Heart right ventricle (tissue), 16 donors: ENCODE measurements at regions of chr2 and their contacts with region 1.

Region 1: GRCh38 chr2:25376750-25377621 is 35.3 kb upstream of the DNMT3A start:
- DNase-seq: peak; percentile 83 to 88
- ATAC-seq: peak; percentile 95 to 99 (median 98)
- H3K4me3 ChIP-seq: peak overlapping the region in 9 of 10 donors; percentile 7 to 44 (median 30)
- H3K27ac ChIP-seq: peak overlapping the region in 3 of 10 donors; percentile 17 to 58 (median 48)
- H3K4me1 ChIP-seq: peaks cover 6 to 38% (median 14%) of the 10 kb centered on the region in 9 donors
- H3K27me3 ChIP-seq: no peaks in the 10 kb centered on the region
- CTCF ChIP-seq: peak; percentile 90 to 99 (median 97)

Region 2: GRCh38 chr2:25151718-25152117 is 225.3 kb before region 1 on chr2:
- intact Hi-C with region 1: loop called in 1 of 10 experiments (anchors 5 kb)
- DNase-seq: no peak
- ATAC-seq: peak in 1 of 8 donors; percentile 42
- H3K4me3 ChIP-seq: no peak overlapping the region
- H3K27ac ChIP-seq: no peak overlapping the region
- H3K4me1 ChIP-seq: no peaks in the 10 kb centered on the region
- H3K27me3 ChIP-seq: no peaks in the 10 kb centered on the region
- CTCF ChIP-seq: no peak

Region 3: DNA sequence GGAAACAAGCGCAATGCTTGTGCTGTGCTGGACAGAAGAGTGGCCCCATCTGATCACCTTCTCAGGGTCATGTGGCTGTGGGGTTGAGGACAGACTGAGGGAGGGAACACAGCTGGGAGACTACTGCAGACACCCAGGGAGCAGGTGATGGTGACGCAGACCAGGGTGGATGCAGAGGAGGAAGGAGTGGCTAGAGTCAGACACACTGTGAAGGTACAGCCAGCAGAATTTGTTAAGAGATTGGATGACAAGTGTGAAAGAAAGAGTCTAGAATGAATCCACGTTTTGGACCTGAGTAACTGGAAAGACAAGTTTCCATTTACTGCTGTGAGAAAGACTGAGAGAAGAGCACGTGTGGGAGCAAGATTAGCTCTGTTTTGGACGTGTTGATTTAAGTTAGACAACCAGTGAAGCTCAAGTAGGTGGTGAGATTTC is 192.7 kb before region 1 on chr2:
- intact Hi-C with region 1: no loop called
- DNase-seq: no peak
- ATAC-seq: no peak
- H3K4me3 ChIP-seq: no peak overlapping the region
- H3K27ac ChIP-seq: no peak overlapping the region
- H3K4me1 ChIP-seq: no peaks in the 10 kb centered on the region
- H3K27me3 ChIP-seq: peaks cover 0 to 9% (median 0%) of the 10 kb centered on the region in 7 donors
- CTCF ChIP-seq: no peak

Region 4: GRCh38 chr2:25309402-25309801 is 67.6 kb before region 1 on chr2:
- intact Hi-C with region 1: loop called in 1 of 10 experiments (anchors 5 kb)
- DNase-seq: peak in 1 of 2 donors; percentile 67
- ATAC-seq: peak in 1 of 8 donors; percentile 22
- H3K4me3 ChIP-seq: no peak overlapping the region
- H3K27ac ChIP-seq: no peak overlapping the region
- H3K4me1 ChIP-seq: peaks cover 35 to 100% (median 88%) of the 10 kb centered on the region in 9 donors
- H3K27me3 ChIP-seq: no peaks in the 10 kb centered on the region
- CTCF ChIP-seq: peak in 8 of 9 donors; percentile 12 to 62 (median 48)

Region 5: DNA sequence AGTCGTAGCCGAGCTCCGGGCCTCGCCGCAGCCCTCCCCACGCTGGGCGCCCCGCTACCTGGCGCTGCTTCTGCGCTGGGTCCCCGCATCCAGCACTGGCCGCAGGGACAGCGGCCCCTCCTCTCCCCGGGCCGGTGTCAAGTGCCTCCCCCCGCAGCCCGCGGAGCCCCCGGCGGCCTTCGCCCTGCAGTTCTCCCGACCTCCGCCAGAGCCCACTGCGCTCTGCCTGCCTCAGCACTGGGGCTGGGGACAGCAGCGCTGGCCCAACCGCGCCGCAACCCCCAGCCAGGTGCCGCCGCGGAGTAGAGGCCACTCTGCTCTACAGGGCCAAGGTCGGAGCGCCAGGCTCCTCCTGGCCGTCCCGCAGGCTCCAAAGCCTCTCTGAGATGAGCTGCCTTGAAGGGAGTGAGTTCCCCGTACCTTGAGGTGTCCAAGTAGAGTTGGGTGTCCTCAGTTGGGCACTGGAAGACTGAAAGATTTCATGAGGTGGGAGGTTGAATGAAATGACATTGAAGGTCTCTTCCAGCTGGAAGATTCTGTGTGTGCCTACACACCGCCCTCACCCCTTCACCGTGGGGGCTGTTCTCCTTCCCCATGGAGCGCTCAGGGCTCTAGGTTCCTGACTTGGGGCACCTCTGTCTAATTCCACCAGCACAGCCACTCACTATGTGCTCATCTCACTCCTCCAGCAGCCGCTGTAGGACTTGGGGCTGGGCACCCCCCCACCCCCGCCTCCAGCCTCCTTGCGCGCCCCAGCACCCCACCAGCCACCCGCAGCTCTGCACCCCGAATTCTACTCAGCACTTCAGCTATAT is 34.4 kb before region 1 on chr2:
- intact Hi-C with region 1: loop called in 5 of 10 experiments (anchors 1 to 5 kb)
- DNase-seq: peak; percentile 84 to 87
- ATAC-seq: peak; percentile 83 to 93 (median 87)
- H3K4me3 ChIP-seq: peak overlapping the region; percentile 38 to 80 (median 70)
- H3K27ac ChIP-seq: peak overlapping the region; percentile 59 to 90 (median 84)
- H3K4me1 ChIP-seq: peaks cover 13 to 40% (median 31%) of the 10 kb centered on the region in 9 donors
- H3K27me3 ChIP-seq: no peaks in the 10 kb centered on the region
- CTCF ChIP-seq: peak; percentile 92 to 99 (median 98)

Region 6: GRCh38 chr2:25514043-25514637 is 137.2 kb after region 1 on chr2:
- intact Hi-C with region 1: loop called in 3 of 10 experiments (anchors 10 kb)
- DNase-seq: no peak
- ATAC-seq: no peak
- H3K4me3 ChIP-seq: no peak overlapping the region
- H3K27ac ChIP-seq: no peak overlapping the region
- H3K4me1 ChIP-seq: peaks cover 0 to 10% (median 0%) of the 10 kb centered on the region in 9 donors
- H3K27me3 ChIP-seq: no peaks in the 10 kb centered on the region
- CTCF ChIP-seq: no peak

Region 7: GRCh38 chr2:25521665-25522387 is 144.8 kb after region 1 on chr2:
- intact Hi-C with region 1: loop called in 5 of 10 experiments (anchors 10 kb)
- DNase-seq: peak in 1 of 2 donors; percentile 46
- ATAC-seq: peak in 7 of 8 donors; percentile 55 to 83 (median 67)
- H3K4me3 ChIP-seq: peak overlapping the region in 6 of 10 donors; percentile 20 to 39 (median 32)
- H3K27ac ChIP-seq: peak overlapping the region in 2 of 10 donors; percentile 4 to 41
- H3K4me1 ChIP-seq: peaks cover 0 to 16% (median 4%) of the 10 kb centered on the region in 9 donors
- H3K27me3 ChIP-seq: no peaks in the 10 kb centered on the region
- CTCF ChIP-seq: peak; percentile 67 to 87 (median 79)